Activated CD4-positive, alpha-beta T cell treated with anti-CD3 and anti-CD28 coated beads for 36 hours (primary cell): ENCODE measurements at regions of chr7 and their contacts with region 1.

Region 1: DNA sequence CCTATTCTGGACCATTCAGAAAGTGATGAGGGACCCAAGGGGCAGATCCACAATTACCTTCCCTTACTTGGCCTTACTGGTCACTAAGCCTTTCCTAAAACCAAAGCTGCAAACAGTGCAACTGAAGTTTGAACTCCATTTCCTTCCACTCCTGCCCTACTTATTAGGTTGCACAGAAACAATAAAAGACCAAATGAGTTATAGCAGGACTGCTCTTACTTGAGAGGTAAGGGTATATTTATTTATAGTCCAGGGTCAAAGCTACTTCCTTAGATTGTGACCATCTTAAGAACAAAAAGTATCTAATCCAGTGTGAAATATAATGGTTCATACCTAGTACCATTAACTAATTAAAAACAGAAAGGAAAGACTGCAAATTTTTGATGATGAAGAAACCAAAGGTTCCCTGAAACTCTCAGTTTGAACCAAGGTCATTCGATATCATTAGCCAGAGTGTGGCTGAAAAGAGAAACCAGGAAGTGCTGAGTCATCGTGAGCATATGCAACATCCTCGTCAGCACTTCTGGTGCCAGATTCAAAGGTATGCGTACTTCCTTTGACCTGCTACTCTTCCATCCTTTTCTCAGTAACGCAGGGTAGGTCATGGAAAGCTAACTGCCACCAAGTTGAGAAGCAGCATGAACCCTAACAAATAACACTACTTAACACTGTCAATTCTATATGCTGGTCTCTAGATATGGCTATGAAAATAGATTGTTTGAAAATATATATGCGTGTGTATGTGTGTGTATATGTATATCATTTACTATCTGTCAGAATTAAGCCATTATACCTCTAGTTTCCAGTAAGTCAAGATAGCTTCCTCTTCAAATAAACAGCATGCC is 26.8 kb downstream of the CDK6 start:
- DNase-seq: peak; percentile 75
- ATAC-seq: peak; percentile 56
- H3K4me3 Mint-ChIP-seq: peak overlapping the region; percentile 50
- H3K27ac Mint-ChIP-seq: peak overlapping the region; percentile 83
- H3K4me1 Mint-ChIP-seq: peaks cover 81% of the 10 kb centered on the region
- H3K27me3 Mint-ChIP-seq: no peaks in the 10 kb centered on the region

Region 2: DNA sequence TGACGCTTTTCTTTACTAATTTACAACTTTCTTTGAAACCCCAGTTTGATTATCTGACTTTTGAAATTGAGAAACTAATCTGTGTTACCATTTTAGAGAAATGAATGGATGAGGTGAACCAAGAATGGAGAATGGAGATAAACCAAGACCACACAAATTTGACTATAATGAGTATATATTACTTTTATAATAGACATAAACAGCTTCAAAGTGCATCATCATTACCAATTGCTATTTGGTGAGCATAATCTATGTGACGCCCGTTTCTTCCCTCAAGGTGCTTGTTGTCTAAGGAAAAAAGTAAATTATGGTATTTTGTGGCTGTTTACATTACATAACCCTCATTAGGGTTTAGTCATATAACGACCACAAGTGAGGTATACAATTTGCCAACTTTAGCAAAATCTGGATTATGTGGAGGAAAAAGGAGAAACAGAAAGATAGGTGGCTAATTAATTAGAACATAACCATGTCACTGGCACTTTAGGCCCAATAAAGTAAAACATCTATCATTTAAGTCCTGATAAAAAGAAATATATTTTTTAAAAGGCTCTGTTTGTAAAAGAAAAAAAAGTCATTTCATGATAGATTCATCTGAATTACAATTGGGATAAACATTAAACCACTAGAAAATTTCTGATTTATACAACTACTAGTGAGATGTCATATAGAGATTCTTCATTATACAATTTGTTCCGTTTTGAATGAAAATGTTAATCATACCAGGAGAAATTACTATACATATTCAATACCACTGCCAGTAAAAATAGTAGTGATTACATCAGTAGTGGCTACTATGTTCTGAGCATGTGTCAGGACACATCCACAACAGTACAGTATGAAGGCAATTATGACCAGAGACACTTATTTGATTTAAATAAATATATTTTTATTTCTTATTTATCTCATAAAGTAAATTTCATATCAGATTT is 101.2 kb before region 1 on chr7:
- CTCF ChIA-PET with region 1: interaction called, 4 read pairs
- POLR2A ChIA-PET with region 1: interaction called, 4 read pairs
- intact Hi-C with region 1: loop called (anchors 1 kb)
- DNase-seq: no peak
- ATAC-seq: peak; percentile 84
- H3K4me3 Mint-ChIP-seq: no peak overlapping the region
- H3K27ac Mint-ChIP-seq: peak overlapping the region; percentile 86
- H3K4me1 Mint-ChIP-seq: peaks cover 52% of the 10 kb centered on the region
- H3K27me3 Mint-ChIP-seq: no peaks in the 10 kb centered on the region

Region 3: DNA sequence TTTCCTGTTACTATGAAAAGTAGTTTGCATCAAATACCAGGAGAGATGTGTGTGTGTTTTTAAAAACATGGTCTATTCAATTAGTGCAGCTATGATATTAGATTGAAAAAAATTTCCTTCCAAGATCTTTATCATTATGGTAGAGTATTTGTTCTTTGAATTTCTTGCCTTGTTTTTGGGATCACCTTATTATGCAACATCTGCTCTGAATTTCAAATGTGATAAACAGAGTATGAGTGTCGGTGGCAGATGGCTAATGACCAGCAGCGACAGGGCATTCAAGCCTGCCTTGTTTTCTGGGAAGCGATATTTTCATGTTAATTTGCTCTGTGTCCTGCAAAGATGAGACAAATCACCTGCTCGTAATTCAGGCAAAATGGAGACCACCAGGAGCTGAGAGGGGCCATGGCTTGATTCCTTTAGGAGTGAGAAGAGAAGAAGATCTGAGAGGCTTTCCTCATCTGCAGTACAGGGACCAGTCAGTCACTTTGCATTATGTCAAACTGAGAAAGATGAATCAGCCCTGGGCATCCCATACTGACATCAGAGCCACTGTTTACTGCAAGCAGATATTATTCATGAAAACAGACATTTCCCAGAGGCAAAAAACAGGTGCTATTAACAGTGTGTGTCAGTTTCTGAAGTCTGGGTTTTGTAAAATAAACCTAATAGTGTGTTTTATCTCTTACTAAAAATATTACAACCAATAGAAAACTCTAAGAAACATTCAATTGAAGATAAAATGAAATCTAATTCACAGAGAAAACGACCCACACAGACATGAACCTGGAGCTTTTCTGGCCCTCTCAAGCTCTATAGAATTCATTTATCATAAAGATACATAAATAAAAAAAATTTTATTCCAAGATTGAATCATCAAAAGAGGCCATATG is 40.9 kb before region 1 on chr7:
- CTCF ChIA-PET with region 1: interaction called, 4 read pairs
- POLR2A ChIA-PET with region 1: interaction called, 3 read pairs
- intact Hi-C with region 1: loop called (anchors 1 to 2 kb)
- DNase-seq: peak; percentile 61
- ATAC-seq: peak; percentile 95
- H3K4me3 Mint-ChIP-seq: peak overlapping the region; percentile 21
- H3K27ac Mint-ChIP-seq: peak overlapping the region; percentile 89
- H3K4me1 Mint-ChIP-seq: peaks cover 67% of the 10 kb centered on the region
- H3K27me3 Mint-ChIP-seq: no peaks in the 10 kb centered on the region

Region 4: DNA sequence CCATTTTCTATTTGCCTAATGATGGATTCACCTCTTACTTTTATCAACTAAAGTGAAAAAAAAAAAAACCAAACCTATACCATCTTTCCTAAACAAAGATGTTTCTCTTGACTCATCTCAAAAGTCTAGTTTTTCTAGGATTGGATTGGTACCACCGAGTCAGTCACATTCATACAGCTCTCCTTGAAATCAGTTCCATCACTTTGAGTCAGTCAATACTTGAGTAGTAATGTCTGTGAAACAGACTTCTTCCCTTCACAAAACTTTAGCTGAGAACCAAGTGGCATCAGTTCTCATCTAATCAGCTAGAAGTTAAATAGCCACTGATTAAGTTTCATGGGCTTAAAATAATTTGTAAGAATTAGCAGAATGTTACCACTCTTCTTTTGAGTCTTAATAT is 13.4 kb after region 1 on chr7:
- CTCF ChIA-PET with region 1: interaction called, 7 read pairs
- POLR2A ChIA-PET with region 1: interaction called, 6 read pairs
- intact Hi-C with region 1: loop called in 1 of 2 experiments (anchors 1 kb)
- DNase-seq: no peak
- ATAC-seq: peak; percentile 50
- H3K4me3 Mint-ChIP-seq: no peak overlapping the region
- H3K27ac Mint-ChIP-seq: peak overlapping the region; percentile 62
- H3K4me1 Mint-ChIP-seq: peaks cover 83% of the 10 kb centered on the region
- H3K27me3 Mint-ChIP-seq: no peaks in the 10 kb centered on the region

Region 5: DNA sequence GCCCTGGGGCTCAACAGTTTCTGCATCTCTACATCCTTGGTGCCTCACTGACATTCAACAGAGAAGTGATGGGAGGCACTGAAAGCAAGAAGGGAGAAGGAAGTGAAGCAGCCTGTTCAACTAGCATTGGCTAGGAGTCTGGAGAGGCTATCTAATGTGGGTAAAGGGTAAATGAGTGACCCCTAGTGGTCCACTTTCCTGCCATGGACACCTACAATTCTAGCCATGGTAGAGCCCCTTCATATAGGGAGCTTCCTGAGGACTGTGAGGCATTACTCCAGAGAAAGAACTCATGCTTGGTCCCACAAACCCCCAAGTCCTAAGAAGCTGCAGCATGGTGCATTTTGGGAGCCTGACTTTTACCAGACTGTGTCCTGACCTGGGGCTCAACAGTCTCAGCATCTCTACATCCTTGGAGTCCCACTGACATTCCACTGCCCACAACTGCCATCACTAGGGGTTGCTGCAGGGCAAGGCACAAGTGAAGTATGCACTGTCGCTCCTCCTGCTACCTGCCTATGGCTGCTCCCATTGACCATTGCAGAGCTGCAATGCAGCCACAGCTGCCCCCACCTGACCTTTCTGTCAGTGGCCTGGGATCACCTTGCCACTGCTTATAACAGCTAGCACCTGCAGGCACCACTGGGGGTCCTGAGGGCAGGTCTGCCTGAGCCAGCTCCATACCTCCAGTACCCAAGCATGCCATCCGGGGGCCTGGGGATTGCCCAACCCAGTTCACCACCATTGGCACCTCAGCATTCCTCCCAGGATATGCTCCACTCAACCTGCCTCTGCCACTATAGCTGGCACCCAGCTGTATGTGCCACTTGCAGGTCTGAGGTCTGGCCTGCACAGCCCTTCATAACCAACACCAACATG is 70.8 kb after region 1 on chr7:
- CTCF ChIA-PET with region 1: no interaction called
- POLR2A ChIA-PET with region 1: no interaction called
- intact Hi-C with region 1: no loop called
- DNase-seq: peak; percentile 26
- ATAC-seq: peak; percentile 54
- H3K4me3 Mint-ChIP-seq: no peak overlapping the region
- H3K27ac Mint-ChIP-seq: no peak overlapping the region
- H3K4me1 Mint-ChIP-seq: peaks cover 18% of the 10 kb centered on the region
- H3K27me3 Mint-ChIP-seq: peaks cover 4% of the 10 kb centered on the region